PC-9 (cell line): ENCODE measurements at regions of chr1 and their contacts with region 1.

Region 1: DNA sequence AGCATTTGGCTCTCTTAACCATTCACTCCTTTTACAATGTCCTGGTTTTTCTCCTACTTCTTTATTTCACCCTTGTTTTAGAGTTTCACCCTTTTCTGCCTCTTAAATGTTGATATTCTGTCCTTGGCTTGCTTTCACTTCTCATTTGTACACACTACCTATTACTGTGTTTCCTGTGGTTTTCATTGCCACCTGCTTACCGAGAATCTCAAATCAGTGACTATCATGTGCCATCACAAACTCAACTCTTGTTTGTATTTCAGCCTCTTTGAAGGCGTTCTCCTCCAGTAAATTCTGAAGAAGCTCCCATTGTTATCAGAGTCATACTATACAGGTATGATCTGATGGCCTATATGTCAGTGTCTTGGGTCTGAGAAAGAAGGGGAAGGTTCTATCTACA is 65.7 kb downstream of the NPHS2 start:
- DNase-seq: no peak
- H3K4me3 ChIP-seq: no peak overlapping the region
- H3K27ac ChIP-seq: no peak overlapping the region
- H3K4me1 ChIP-seq: no peaks in the 10 kb centered on the region
- H3K27me3 ChIP-seq: no peaks in the 10 kb centered on the region
- CTCF ChIP-seq: no peak

Region 2: DNA sequence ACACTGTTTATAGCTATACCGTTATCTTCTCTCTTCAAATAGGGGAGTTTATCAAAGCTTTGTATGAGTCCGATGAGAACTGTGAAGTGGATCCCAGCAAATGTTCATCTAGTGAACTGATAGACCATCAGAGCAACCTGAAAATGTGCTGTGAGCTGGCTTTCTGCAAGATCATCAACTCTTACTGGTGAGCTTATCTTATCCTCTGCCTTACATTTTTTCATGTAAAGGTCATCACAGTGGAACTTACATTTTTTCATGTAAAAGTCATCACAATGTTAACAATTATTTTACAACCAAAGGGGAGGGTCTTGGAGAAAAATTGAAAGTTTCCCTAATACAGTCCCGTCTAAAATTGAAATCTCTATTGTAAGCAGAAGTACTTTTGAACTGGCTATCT is 1058.5 kb before region 1 on chr1:
- CTCF ChIA-PET with region 1: no interaction called
- POLR2A ChIA-PET with region 1: no interaction called
- intact Hi-C with region 1: no loop called
- DNase-seq: peak in 1 of 2 experiments; percentile 39
- H3K4me3 ChIP-seq: no peak overlapping the region
- H3K27ac ChIP-seq: no peak overlapping the region
- H3K4me1 ChIP-seq: peaks cover 10% of the 10 kb centered on the region; the same call in 1 of the 2 replicates
- H3K27me3 ChIP-seq: no peaks in the 10 kb centered on the region
- CTCF ChIP-seq: no peak

Region 3: DNA sequence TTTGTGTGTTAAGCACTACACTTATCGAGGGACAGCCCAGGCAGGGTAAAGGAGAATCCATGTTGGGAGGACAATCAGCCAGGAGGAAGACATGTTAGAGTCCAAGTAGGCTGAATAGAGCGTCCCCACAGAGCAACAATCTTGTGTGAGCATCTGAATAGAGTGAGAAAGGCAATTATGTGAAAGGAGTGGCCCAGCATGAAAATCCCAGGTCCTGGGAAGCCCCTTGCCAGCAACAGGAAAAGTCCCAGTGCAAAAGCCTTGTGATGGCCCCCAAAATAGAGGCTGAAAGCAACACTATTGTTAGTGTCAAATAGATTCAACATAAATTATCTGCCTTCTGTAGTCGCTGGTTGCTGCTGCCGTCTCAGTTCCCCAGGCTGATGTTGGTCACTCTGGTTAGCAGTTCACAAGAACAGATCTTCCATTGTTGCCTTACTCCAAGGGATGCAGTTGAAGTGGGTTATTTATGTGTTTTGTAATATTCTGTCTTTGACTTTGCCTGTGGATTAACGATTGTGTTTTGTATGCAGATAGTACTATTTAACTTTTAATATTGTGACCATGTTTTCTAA is 268.4 kb before region 1 on chr1:
- CTCF ChIA-PET with region 1: no interaction called
- POLR2A ChIA-PET with region 1: interaction called, 30 read pairs
- intact Hi-C with region 1: no loop called
- DNase-seq: no peak
- H3K4me3 ChIP-seq: no peak overlapping the region
- H3K27ac ChIP-seq: no peak overlapping the region
- H3K4me1 ChIP-seq: no peaks in the 10 kb centered on the region
- H3K27me3 ChIP-seq: no peaks in the 10 kb centered on the region
- CTCF ChIP-seq: no peak

Region 4: DNA sequence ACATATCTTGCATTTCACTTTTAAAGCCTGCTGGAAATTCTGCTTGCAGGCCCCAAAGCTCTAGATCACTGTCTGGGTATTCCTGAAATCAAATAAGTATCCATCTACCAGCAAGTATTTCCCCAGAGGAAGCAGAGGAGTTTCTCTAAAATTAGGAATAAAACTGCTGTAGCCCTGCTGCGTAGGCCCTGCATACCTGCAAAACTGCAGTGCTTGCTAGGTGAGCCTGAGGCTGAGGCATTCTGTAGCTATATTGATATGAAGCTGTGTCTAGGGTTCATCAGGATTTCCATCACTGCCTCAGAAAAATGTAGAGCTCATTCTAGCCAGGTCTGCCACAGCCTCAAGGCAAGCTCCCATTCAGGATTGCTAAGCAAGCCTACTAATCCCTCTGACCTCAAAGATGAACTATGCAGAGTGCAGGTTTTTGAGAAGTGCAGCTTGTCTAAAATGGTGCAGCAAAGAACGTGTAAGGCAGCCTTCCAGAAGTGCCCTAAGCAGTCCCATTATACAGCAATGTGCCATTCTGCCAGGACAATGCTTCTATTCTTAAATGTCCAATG is 37.1 kb after region 1 on chr1:
- CTCF ChIA-PET with region 1: interaction called, 12 read pairs
- POLR2A ChIA-PET with region 1: no interaction called
- intact Hi-C with region 1: no loop called
- DNase-seq: no peak
- H3K4me3 ChIP-seq: no peak overlapping the region
- H3K27ac ChIP-seq: no peak overlapping the region
- H3K4me1 ChIP-seq: peaks cover 24% of the 10 kb centered on the region
- H3K27me3 ChIP-seq: no peaks in the 10 kb centered on the region
- CTCF ChIP-seq: no peak